ENCODE measurements at regions of chr17 and their contacts with region 1.

Region 1: DNA sequence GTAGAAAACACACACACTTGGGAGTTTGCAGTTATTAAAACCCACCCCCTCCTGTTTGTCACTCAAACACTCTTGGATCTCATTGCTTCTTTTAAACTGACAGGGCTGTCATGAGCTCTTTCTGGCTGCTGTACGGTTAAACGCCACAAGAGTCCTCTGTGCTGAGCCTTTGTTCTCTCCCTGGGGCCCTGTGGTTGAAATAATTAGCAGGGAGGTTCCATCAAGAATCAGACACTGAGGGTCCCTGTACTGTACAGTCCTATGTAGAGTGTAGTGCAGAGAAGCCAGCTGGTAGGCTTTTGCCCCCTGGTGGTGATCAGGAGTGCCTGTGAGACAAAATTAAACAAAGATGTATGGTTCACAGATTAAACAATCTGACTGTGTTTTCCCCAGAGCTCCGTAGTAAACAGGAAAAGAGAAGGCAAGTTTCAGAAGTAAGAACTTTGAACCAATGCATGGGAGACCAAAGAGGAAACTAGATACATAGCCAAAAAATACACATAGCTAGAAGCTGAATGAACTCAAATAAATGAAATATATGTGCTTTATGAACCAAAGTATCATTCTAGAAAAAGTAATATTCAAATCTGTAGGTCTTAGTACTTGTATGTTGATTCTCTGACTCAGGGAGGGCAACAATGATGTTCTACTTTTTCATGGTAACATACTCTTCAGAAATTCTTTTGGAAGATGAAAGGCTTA is 1.4 kb upstream of the SSH2 start:
- DNase-seq: peak; percentile 27 to 91 (median 70)
- ATAC-seq: peak; percentile 66
- H3K4me3 ChIP-seq: peak overlapping the region; percentile 77 to 82
- H3K4me3 Mint-ChIP-seq: no peak overlapping the region
- H3K27ac ChIP-seq: peak overlapping the region in 1 of 2 experiments; percentile 37
- H3K27ac Mint-ChIP-seq: no peak overlapping the region
- H3K4me1 ChIP-seq: peaks cover 27% of the 10 kb centered on the region
- H3K4me1 Mint-ChIP-seq: peaks cover 29% of the 10 kb centered on the region
- H3K27me3 ChIP-seq: no peaks in the 10 kb centered on the region
- H3K27me3 Mint-ChIP-seq: no peaks in the 10 kb centered on the region
- CTCF ChIP-seq: peak; percentile 85

Region 2: GRCh38 chr17:29579866-29580771 is 351.3 kb before region 1 on chr17:
- CTCF ChIA-PET with region 1: interaction called, 7 read pairs
- POLR2A ChIA-PET with region 1: no interaction called
- intact Hi-C with region 1: loop called (anchors 1 kb)
- DNase-seq: peak; percentile 81 to 95 (median 92)
- ATAC-seq: peak; percentile 99
- H3K4me3 ChIP-seq: no peak overlapping the region
- H3K4me3 Mint-ChIP-seq: no peak overlapping the region
- H3K27ac ChIP-seq: no peak overlapping the region
- H3K27ac Mint-ChIP-seq: peak overlapping the region; percentile 34
- H3K4me1 ChIP-seq: peaks cover 13% of the 10 kb centered on the region
- H3K4me1 Mint-ChIP-seq: peaks cover 11% of the 10 kb centered on the region
- H3K27me3 ChIP-seq: no peaks in the 10 kb centered on the region
- H3K27me3 Mint-ChIP-seq: no peaks in the 10 kb centered on the region
- CTCF ChIP-seq: peak; percentile 80

Region 3: DNA sequence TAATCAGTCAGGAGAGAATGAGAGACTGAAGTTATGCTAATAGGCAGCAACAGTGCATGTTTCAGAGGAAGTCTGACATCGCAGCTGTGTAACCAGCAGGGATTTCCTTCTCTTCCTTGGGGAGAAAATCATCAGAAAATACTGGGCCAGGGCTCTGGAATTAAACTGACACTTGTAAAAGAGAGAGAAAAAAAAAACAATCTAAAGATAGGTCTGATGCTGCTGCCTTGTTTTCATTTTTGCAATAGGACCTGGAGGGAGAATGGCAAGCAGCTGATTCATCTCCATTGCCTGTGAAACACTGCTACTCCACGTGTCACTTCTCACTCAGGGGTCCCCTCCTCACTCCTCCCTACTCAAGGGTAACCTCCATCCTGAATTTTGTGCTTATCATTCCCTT is 291.0 kb before region 1 on chr17:
- CTCF ChIA-PET with region 1: interaction called, 7 read pairs
- POLR2A ChIA-PET with region 1: interaction called, 6 read pairs
- intact Hi-C with region 1: loop called (anchors 1 to 2 kb)
- DNase-seq: no peak
- ATAC-seq: no peak
- H3K4me3 ChIP-seq: no peak overlapping the region
- H3K4me3 Mint-ChIP-seq: no peak overlapping the region
- H3K27ac ChIP-seq: no peak overlapping the region
- H3K27ac Mint-ChIP-seq: peak overlapping the region; percentile 61
- H3K4me1 ChIP-seq: no peaks in the 10 kb centered on the region
- H3K4me1 Mint-ChIP-seq: peaks cover 17% of the 10 kb centered on the region
- H3K27me3 ChIP-seq: no peaks in the 10 kb centered on the region
- H3K27me3 Mint-ChIP-seq: no peaks in the 10 kb centered on the region
- CTCF ChIP-seq: no peak

Region 4: GRCh38 chr17:29807520-29808351 is 123.6 kb before region 1 on chr17:
- CTCF ChIA-PET with region 1: interaction called, 299 read pairs
- POLR2A ChIA-PET with region 1: interaction called, 26 read pairs
- intact Hi-C with region 1: loop called (anchors 1 kb)
- DNase-seq: peak; percentile 30 to 81 (median 73)
- ATAC-seq: peak; percentile 81
- H3K4me3 ChIP-seq: no peak overlapping the region
- H3K4me3 Mint-ChIP-seq: no peak overlapping the region
- H3K27ac ChIP-seq: no peak overlapping the region
- H3K27ac Mint-ChIP-seq: no peak overlapping the region
- H3K4me1 ChIP-seq: no peaks in the 10 kb centered on the region
- H3K4me1 Mint-ChIP-seq: peaks cover 15% of the 10 kb centered on the region
- H3K27me3 ChIP-seq: no peaks in the 10 kb centered on the region
- H3K27me3 Mint-ChIP-seq: no peaks in the 10 kb centered on the region
- CTCF ChIP-seq: peak; percentile 94

Region 5: GRCh38 chr17:29918922-29919856 is 12.2 kb before region 1 on chr17:
- CTCF ChIA-PET with region 1: interaction called, 32 read pairs
- POLR2A ChIA-PET with region 1: interaction called, 3 read pairs
- intact Hi-C with region 1: no loop called
- DNase-seq: no peak
- ATAC-seq: no peak
- H3K4me3 ChIP-seq: no peak overlapping the region
- H3K4me3 Mint-ChIP-seq: no peak overlapping the region
- H3K27ac ChIP-seq: no peak overlapping the region
- H3K27ac Mint-ChIP-seq: no peak overlapping the region
- H3K4me1 ChIP-seq: no peaks in the 10 kb centered on the region
- H3K4me1 Mint-ChIP-seq: peaks cover 33% of the 10 kb centered on the region
- H3K27me3 ChIP-seq: no peaks in the 10 kb centered on the region
- H3K27me3 Mint-ChIP-seq: no peaks in the 10 kb centered on the region
- CTCF ChIP-seq: no peak

Measured in CD8-positive, alpha-beta T cell (primary cell).